ENCODE measurements at regions of chr2 and their contacts with region 1.

Region 1: DNA sequence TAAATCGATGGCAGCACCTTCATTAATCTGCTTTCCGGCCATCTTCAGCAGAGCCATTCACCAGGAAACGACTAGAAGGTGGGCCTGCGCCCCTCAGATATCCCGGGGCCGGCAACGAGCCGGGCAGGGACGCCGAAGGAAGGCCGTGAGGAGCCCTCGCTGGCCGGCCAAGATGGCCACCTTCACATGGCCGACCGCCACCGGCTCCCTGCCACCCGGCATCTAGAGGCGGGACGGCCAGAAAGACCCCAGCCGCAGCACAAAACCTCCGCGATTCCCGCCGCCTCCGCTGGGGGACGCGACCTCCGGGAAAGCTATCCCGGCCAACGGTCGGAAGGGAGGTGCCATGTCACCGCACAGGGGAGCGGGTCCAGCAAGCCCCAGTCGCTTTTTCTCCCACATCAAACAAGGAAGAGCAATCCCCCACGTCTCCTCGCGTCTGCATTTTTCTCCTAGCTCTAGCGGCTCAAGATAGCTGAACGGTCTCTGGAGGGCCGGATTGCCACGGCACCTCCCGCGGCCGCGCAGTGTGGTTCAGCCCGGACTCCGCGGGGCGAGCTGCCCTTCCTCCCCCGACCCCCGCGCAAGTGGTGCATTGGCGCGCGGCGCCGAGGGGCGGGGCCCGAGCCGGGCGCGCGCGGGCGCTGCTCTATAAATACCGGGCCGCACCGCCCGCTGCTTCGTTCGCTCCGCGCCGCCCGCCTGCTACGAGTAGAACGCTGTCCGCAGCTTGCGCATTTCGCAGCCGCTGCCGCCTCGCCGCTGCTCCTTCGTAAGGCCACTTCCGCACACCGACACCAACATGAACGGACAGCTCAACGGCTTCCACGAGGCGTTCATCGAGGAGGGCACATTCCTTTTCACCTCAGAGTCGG is at the start of gene MAT2A:
- DNase-seq: peak; percentile 97
- H3K4me3 ChIP-seq: peak within 1 kb of the TSS; percentile 94 to 99
- H3K27ac ChIP-seq: peak within 1 kb of the TSS; percentile 98 to 100
- H3K4me1 ChIP-seq: peaks cover 29 to 43% of the 10 kb centered on the region in 2 experiments; a peak in 3 of 4 replicates
- H3K27me3 ChIP-seq: no peaks in the 10 kb centered on the region
- CTCF ChIP-seq: peak; percentile 67
- EP300 ChIP-seq: peak in 1 of 2 experiments; percentile 10; a peak in 1 of 4 replicates
- RAD21 ChIP-seq: peak; percentile 60
- polyA plus RNA-seq, gene MAT2A: 187 and 326 TPM in 2 replicates

Region 2: GRCh38 chr2:85430752-85431569 is 107.8 kb before region 1 on chr2:
- CTCF ChIA-PET with region 1: interaction called, 61 read pairs
- POLR2A ChIA-PET with region 1: interaction called, 94 read pairs
- DNase-seq: peak; percentile 79
- H3K4me3 ChIP-seq: no peak overlapping the region
- H3K27ac ChIP-seq: no peak overlapping the region; a peak in 1 of 4 replicates
- H3K4me1 ChIP-seq: peaks cover 0 to 56% of the 10 kb centered on the region in 2 experiments; a peak in 2 of 4 replicates
- H3K27me3 ChIP-seq: no peaks in the 10 kb centered on the region
- CTCF ChIP-seq: no peak
- EP300 ChIP-seq: no peak
- RAD21 ChIP-seq: no peak

Region 3: DNA sequence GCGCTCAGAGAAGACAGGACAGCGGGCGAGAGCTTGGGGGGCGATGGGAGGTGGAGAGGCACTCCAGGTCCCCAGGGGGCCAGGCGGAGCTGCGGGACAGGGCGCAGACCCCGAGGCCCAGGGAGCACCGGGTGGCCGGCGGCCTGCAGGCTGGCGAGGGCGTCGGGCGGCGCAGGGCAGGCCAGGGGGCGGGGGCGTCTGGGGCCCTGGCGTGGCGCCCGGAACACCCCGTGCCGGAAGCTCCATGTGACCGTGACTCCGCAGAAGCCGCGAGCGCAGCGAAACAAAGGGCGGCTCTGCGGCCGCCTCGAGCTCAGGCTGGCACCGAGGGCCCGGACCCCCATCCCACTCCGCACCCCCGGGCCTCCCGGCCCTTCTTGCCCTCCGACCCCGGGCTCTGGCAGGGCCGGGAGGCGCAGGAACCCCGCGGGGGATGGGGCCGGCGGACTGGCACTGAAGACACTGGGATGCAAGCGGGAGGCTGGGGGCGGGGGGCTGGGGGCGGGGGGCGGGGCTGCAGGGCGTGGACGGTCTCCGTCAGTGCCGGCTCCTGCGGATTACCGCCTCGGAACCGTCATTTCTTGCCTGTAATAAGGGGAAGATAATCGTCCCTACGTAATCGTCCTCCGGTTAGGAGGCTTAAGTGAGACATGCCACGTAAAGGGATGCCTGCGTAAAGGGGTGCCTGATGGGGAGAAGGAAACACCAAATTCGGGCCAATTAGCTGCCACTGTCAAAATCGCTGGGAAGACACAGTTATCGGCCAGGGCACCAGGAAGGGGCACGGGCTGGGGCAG is 101.0 kb before region 1 on chr2:
- CTCF ChIA-PET with region 1: interaction called, 61 read pairs
- POLR2A ChIA-PET with region 1: interaction called, 94 read pairs
- DNase-seq: peak; percentile 97
- H3K4me3 ChIP-seq: peak overlapping the region in 1 of 2 experiments; percentile 42; a peak in 2 of 4 replicates
- H3K27ac ChIP-seq: peak overlapping the region; percentile 58 to 90
- H3K4me1 ChIP-seq: peaks cover 14 to 63% of the 10 kb centered on the region in 2 experiments; a peak in 3 of 4 replicates
- H3K27me3 ChIP-seq: no peaks in the 10 kb centered on the region
- CTCF ChIP-seq: no peak
- EP300 ChIP-seq: peak; percentile 19 to 51; a peak in 2 of 4 replicates
- RAD21 ChIP-seq: no peak

Region 4: GRCh38 chr2:85445316-85446295 is 93.1 kb before region 1 on chr2:
- CTCF ChIA-PET with region 1: interaction called, 10 read pairs
- POLR2A ChIA-PET with region 1: interaction called, 90 read pairs
- DNase-seq: peak; percentile 73
- H3K4me3 ChIP-seq: no peak overlapping the region
- H3K27ac ChIP-seq: peak overlapping the region; percentile 42 to 90; a peak in 3 of 4 replicates
- H3K4me1 ChIP-seq: peaks cover 18 to 33% of the 10 kb centered on the region in 2 experiments; a peak in 2 of 4 replicates
- H3K27me3 ChIP-seq: no peaks in the 10 kb centered on the region
- CTCF ChIP-seq: no peak
- EP300 ChIP-seq: peak in 1 of 2 experiments; percentile 43; a peak in 1 of 4 replicates
- RAD21 ChIP-seq: peak; percentile 23; the same call in 1 of the 2 replicates

Region 5: GRCh38 chr2:85504778-85505323 is 33.9 kb before region 1 on chr2:
- CTCF ChIA-PET with region 1: interaction called, 8 read pairs
- POLR2A ChIA-PET with region 1: interaction called, 25 read pairs
- DNase-seq: peak; percentile 71
- H3K4me3 ChIP-seq: no peak overlapping the region
- H3K27ac ChIP-seq: peak overlapping the region; percentile 60 to 68
- H3K4me1 ChIP-seq: peaks cover 19 to 25% of the 10 kb centered on the region in 2 experiments; a peak in 3 of 4 replicates
- H3K27me3 ChIP-seq: no peaks in the 10 kb centered on the region
- CTCF ChIP-seq: no peak
- EP300 ChIP-seq: peak; percentile 56 to 90; a peak in 3 of 4 replicates
- RAD21 ChIP-seq: peak; percentile 3; the same call in 1 of the 2 replicates

Region 6: GRCh38 chr2:85524336-85524933 is 14.3 kb before region 1 on chr2:
- CTCF ChIA-PET with region 1: interaction called, 67 read pairs
- POLR2A ChIA-PET with region 1: interaction called, 135 read pairs
- DNase-seq: peak; percentile 75
- H3K4me3 ChIP-seq: no peak overlapping the region
- H3K27ac ChIP-seq: peak overlapping the region; percentile 40 to 98; a peak in 3 of 4 replicates
- H3K4me1 ChIP-seq: peaks cover 9 to 30% of the 10 kb centered on the region in 2 experiments; a peak in 3 of 4 replicates
- H3K27me3 ChIP-seq: no peaks in the 10 kb centered on the region; the same call in 1 of the 2 replicates
- CTCF ChIP-seq: no peak
- EP300 ChIP-seq: peak in 1 of 2 experiments; percentile 82; a peak in 2 of 4 replicates
- RAD21 ChIP-seq: peak; percentile 43

Region 7: GRCh38 chr2:85551698-85552678 is 13.3 kb after region 1 on chr2:
- CTCF ChIA-PET with region 1: interaction called, 111 read pairs
- POLR2A ChIA-PET with region 1: interaction called, 75 read pairs
- DNase-seq: peak; percentile 73
- H3K4me3 ChIP-seq: no peak overlapping the region
- H3K27ac ChIP-seq: no peak overlapping the region
- H3K4me1 ChIP-seq: peaks cover 0 to 13% of the 10 kb centered on the region in 2 experiments; a peak in 2 of 4 replicates
- H3K27me3 ChIP-seq: no peaks in the 10 kb centered on the region
- CTCF ChIP-seq: peak; percentile 94
- EP300 ChIP-seq: no peak
- RAD21 ChIP-seq: peak; percentile 97

Region 8: GRCh38 chr2:85584857-85585783 is 46.4 kb after region 1 on chr2:
- CTCF ChIA-PET with region 1: no interaction called
- POLR2A ChIA-PET with region 1: no interaction called
- DNase-seq: peak; percentile 31
- H3K4me3 ChIP-seq: no peak overlapping the region
- H3K27ac ChIP-seq: peak overlapping the region in 1 of 2 experiments; percentile 14; a peak in 1 of 4 replicates
- H3K4me1 ChIP-seq: peaks cover 10 to 11% of the 10 kb centered on the region in 2 experiments; a peak in 2 of 4 replicates
- H3K27me3 ChIP-seq: no peaks in the 10 kb centered on the region
- CTCF ChIP-seq: no peak
- EP300 ChIP-seq: no peak
- RAD21 ChIP-seq: no peak

Region 9: GRCh38 chr2:85804583-85804982 is 265.9 kb after region 1 on chr2:
- CTCF ChIA-PET with region 1: no interaction called
- POLR2A ChIA-PET with region 1: no interaction called
- DNase-seq: peak; percentile 70
- H3K4me3 ChIP-seq: no peak overlapping the region
- H3K27ac ChIP-seq: no peak overlapping the region
- H3K4me1 ChIP-seq: peaks cover 2 to 5% of the 10 kb centered on the region in 2 experiments; a peak in 1 of 4 replicates
- H3K27me3 ChIP-seq: no peaks in the 10 kb centered on the region
- CTCF ChIP-seq: peak; percentile 62
- EP300 ChIP-seq: no peak
- RAD21 ChIP-seq: peak; percentile 54

Region 10: GRCh38 chr2:86518481-86518880 is 979.8 kb after region 1 on chr2:
- CTCF ChIA-PET with region 1: no interaction called
- POLR2A ChIA-PET with region 1: no interaction called
- DNase-seq: peak; percentile 24
- H3K4me3 ChIP-seq: no peak overlapping the region
- H3K27ac ChIP-seq: no peak overlapping the region
- H3K4me1 ChIP-seq: no peaks in the 10 kb centered on the region
- H3K27me3 ChIP-seq: no peaks in the 10 kb centered on the region
- CTCF ChIP-seq: peak; percentile 46
- EP300 ChIP-seq: no peak
- RAD21 ChIP-seq: peak; percentile 61

Measured in SK-N-SH (cell line).